Activated CD4-positive, alpha-beta memory T cell treated with anti-CD3 and anti-CD28 coated beads for 36 hours (primary cell): ENCODE measurements at regions of chr3 and their contacts with region 1.

Region 1: GRCh38 chr3:68972358-68972979 is 40.1 kb upstream of the TAFA4 start:
- DNase-seq: peak; percentile 58
- H3K4me3 Mint-ChIP-seq: no peak overlapping the region
- H3K27ac Mint-ChIP-seq: no peak overlapping the region
- H3K4me1 Mint-ChIP-seq: no peaks in the 10 kb centered on the region
- H3K27me3 Mint-ChIP-seq: peaks cover 2% of the 10 kb centered on the region

Region 2: GRCh38 chr3:68893600-68894239 is 78.7 kb before region 1 on chr3:
- CTCF ChIA-PET with region 1: interaction called, 8 read pairs
- POLR2A ChIA-PET with region 1: no interaction called
- intact Hi-C with region 1: loop called (anchors 1 kb)
- DNase-seq: no peak
- H3K4me3 Mint-ChIP-seq: no peak overlapping the region
- H3K27ac Mint-ChIP-seq: no peak overlapping the region
- H3K4me1 Mint-ChIP-seq: no peaks in the 10 kb centered on the region
- H3K27me3 Mint-ChIP-seq: peaks cover 4% of the 10 kb centered on the region

Region 3: GRCh38 chr3:69020424-69020823 is 48.0 kb after region 1 on chr3:
- CTCF ChIA-PET with region 1: no interaction called
- POLR2A ChIA-PET with region 1: no interaction called
- intact Hi-C with region 1: no loop called
- DNase-seq: no peak
- H3K4me3 Mint-ChIP-seq: no peak overlapping the region
- H3K27ac Mint-ChIP-seq: no peak overlapping the region
- H3K4me1 Mint-ChIP-seq: peaks cover 3% of the 10 kb centered on the region
- H3K27me3 Mint-ChIP-seq: no peaks in the 10 kb centered on the region

Region 4: DNA sequence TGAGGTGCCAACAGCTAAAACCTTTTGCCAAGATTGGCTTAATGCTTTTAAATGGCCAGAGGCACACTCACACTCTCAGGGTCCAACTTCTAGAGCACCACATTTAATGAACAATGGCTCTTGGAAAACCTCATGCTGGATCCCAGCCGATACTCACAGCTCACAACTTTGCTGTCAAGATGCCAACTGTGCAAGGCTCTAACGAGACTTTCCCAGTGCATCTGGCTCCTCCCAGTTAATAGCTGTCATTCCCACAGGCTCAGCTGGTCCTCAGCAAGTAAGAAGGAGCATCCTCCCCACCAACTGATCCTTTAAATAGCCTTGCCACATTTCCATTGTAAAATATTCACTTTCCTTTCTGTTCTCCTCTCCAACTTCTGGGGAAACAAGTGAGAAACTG is 433.7 kb after region 1 on chr3:
- CTCF ChIA-PET with region 1: no interaction called
- POLR2A ChIA-PET with region 1: no interaction called
- intact Hi-C with region 1: no loop called
- DNase-seq: no peak
- H3K4me3 Mint-ChIP-seq: no peak overlapping the region
- H3K27ac Mint-ChIP-seq: no peak overlapping the region
- H3K4me1 Mint-ChIP-seq: peaks cover 4% of the 10 kb centered on the region
- H3K27me3 Mint-ChIP-seq: peaks cover 3% of the 10 kb centered on the region